WTC11 (cell line): ENCODE measurements at regions of chr10 and their contacts with region 1.

Region 1: DNA sequence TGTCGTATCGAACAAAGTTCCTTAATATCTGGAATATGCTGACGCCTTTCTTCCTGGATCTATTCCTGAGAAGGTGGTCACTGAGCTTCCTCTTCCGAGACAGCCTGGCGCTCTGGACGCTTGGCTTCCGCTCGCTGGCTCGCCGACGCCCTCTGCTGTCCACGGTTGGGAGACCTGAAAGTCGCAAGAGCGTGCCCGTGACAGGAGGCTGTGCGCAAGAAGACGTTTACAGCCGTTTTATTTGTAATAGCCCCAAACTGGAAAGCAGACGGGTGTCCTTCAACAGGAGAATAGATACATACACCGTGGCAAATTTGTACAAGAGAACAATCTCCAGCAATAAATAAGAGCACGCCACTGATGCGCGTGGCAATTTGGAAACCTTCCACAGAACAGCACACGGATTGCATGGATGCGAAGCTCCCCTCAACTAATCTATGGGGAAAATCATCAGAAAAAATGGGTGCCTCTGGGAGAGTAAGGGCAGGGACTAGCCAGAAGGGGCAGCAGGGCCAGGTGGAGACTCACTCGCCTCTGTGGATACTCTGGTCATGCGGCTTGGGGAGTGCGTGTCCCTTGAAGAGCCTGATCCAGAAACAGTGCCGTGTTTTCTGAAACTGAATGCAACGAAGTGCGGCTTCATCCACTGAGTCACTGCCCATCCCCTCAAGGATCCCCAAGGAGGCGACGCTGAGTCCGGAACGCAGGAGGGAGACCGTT is 41.5 kb upstream of the BNIP3 start:
- DNase-seq: peak; percentile 88
- ATAC-seq: peak; percentile 93
- H3K4me3 Mint-ChIP-seq: 0 out of 2 replicates have a peak overlapping the region, but pooled peaks have one; percentile 0
- H3K27ac Mint-ChIP-seq: no peak overlapping the region
- H3K4me1 Mint-ChIP-seq: peaks cover 8% of the 10 kb centered on the region
- H3K27me3 Mint-ChIP-seq: peaks cover 22% of the 10 kb centered on the region
- CTCF ChIP-seq: peak; percentile 76

Region 2: DNA sequence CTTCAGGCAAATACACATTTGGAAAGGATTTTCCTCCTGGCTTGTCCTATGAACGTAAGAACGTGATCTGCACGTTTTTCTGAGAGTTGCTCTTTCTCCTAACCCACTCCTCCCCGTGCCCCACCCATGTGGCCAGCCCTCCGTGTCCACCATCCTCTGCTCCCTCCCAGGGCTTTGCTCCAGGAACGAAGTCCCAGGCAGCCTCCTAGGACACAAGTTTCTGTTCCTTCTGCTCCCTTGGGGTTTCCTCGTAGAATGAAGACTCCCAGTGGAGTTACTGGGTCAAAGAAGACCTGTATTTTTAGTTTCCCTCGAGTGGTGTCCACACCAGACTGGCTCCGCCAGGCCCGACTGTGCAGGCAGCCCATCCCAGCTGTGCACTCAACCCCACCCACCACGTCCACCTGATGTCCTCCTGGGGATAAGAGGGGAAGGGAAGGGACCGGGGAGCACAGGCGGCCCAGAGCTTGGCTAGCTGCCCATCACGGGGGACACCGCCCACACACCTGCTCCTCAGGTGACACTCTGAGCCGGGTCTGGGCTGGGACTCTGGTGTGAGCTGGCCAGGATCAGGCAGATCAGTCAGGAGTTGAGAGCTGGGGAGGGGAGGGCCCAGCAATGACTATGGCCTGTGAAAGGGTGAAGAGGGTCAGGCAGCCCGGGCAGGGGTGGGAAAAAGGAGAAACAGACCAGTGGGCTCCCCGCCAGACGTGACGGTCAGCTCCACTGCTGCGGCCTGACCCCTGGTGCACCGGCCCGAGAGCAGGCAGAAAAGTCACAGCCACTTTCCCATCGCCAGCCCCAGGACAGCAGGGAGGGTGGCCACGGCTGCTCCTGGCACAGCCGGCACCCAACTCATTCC is 176.8 kb before region 1 on chr10:
- CTCF ChIA-PET with region 1: no interaction called
- POLR2A ChIA-PET with region 1: no interaction called
- DNase-seq: no peak
- ATAC-seq: no peak
- H3K4me3 Mint-ChIP-seq: no peak overlapping the region
- H3K27ac Mint-ChIP-seq: no peak overlapping the region
- H3K4me1 Mint-ChIP-seq: no peaks in the 10 kb centered on the region
- H3K27me3 Mint-ChIP-seq: no peaks in the 10 kb centered on the region
- CTCF ChIP-seq: no peak

Region 3: DNA sequence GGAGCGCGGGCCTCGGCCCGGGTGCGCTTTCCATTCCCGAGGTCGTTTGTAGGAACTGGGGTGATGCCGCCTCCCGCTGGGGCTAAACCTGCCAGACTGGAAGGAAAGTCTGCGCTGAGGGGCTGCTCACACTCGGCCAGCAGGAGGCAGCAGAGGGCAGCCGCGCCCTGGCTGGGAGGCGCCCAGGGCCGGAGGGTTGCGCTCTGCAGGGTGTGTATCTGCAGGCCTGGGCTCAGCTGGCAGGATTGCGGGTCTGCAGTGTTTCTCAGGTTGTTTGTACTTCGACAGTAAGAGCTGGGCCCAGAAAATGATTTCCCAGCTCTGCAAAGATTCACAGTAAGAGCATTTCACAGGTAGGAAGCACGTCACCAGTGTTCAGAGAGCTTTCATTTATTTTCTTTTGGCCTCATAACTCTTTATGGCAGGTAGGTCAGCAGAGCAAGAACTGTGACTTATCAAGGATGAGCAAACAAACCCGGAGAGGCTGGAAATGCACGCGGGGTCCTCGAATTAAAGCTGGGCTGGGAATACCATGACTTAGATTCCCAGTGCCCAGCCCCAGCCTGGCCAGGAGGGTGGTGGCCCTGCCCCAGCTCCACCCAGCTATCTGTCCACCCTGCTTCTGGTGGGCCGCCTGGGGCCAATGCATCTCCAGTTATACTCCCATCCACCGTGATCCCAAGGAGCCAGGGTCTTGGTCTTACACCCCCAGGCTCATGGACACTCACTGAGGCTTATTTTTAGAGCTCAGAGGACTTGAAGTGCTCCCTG is 137.7 kb before region 1 on chr10:
- CTCF ChIA-PET with region 1: interaction called, 22 read pairs
- POLR2A ChIA-PET with region 1: no interaction called
- DNase-seq: peak; percentile 88
- ATAC-seq: peak; percentile 99
- H3K4me3 Mint-ChIP-seq: no peak overlapping the region
- H3K27ac Mint-ChIP-seq: no peak overlapping the region
- H3K4me1 Mint-ChIP-seq: peaks cover 7% of the 10 kb centered on the region
- H3K27me3 Mint-ChIP-seq: no peaks in the 10 kb centered on the region
- CTCF ChIP-seq: peak; percentile 78

Region 4: GRCh38 chr10:131943021-131943814 is 80.0 kb before region 1 on chr10:
- CTCF ChIA-PET with region 1: interaction called, 23 read pairs
- POLR2A ChIA-PET with region 1: no interaction called
- DNase-seq: peak; percentile 72
- ATAC-seq: peak; percentile 96
- H3K4me3 Mint-ChIP-seq: no peak overlapping the region
- H3K27ac Mint-ChIP-seq: 0 out of 2 replicates have a peak overlapping the region, but pooled peaks have one; percentile 29
- H3K4me1 Mint-ChIP-seq: no peaks in the 10 kb centered on the region
- H3K27me3 Mint-ChIP-seq: no peaks in the 10 kb centered on the region
- CTCF ChIP-seq: no peak; the same call in 1 of the 2 replicates

Region 5: GRCh38 chr10:131972474-131973071 is 50.7 kb before region 1 on chr10:
- CTCF ChIA-PET with region 1: interaction called, 21 read pairs
- POLR2A ChIA-PET with region 1: interaction called, 4 read pairs
- DNase-seq: no peak
- ATAC-seq: peak; percentile 49; the same call in 1 of the 2 replicates
- H3K4me3 Mint-ChIP-seq: no peak overlapping the region
- H3K27ac Mint-ChIP-seq: peak overlapping the region; percentile 83; the same call in 1 of the 2 replicates
- H3K4me1 Mint-ChIP-seq: peaks cover 36% of the 10 kb centered on the region
- H3K27me3 Mint-ChIP-seq: no peaks in the 10 kb centered on the region
- CTCF ChIP-seq: no peak

Region 6: DNA sequence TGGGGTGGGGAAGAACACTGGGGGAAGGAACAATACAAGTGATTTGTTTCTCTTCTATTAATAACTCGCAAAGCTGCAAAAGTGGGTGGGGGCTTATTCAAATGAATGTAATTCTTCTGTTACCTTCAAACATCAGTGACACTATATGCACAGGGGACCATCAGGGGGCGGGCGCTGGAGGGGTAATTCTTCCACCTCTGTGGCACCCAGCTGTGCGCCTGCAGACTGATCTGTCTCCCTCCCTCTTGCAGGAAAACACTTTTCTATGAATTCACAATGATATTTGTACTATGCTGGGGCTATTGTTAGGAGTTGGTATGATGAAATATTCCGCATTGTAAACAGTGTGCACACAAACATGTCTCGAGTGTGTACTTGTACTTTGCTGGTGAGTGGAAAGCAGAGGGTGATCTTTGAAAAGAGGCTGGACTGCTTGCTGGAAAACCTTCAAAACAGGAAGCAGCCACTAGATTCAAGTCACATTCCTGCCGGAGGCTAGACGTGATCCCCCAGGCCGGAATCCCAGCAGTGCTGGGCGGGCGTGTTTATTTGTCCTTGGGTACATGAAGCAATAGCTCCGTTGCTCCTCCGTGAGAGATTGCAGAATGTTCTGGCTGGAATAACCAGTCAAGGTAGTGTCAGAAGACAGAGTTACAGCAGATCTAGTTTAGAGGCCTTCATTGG is 25.7 kb before region 1 on chr10:
- CTCF ChIA-PET with region 1: interaction called, 112 read pairs
- POLR2A ChIA-PET with region 1: no interaction called
- DNase-seq: peak; percentile 57
- ATAC-seq: peak; percentile 46
- H3K4me3 Mint-ChIP-seq: no peak overlapping the region
- H3K27ac Mint-ChIP-seq: peak overlapping the region; percentile 95
- H3K4me1 Mint-ChIP-seq: peaks cover 60% of the 10 kb centered on the region
- H3K27me3 Mint-ChIP-seq: no peaks in the 10 kb centered on the region
- CTCF ChIP-seq: no peak

Region 7: GRCh38 chr10:132036153-132036886 is 13.1 kb after region 1 on chr10:
- CTCF ChIA-PET with region 1: interaction called, 17 read pairs
- POLR2A ChIA-PET with region 1: no interaction called
- DNase-seq: peak; percentile 58
- ATAC-seq: peak; percentile 26
- H3K4me3 Mint-ChIP-seq: peak overlapping the region; percentile 68
- H3K27ac Mint-ChIP-seq: no peak overlapping the region
- H3K4me1 Mint-ChIP-seq: peaks cover 26% of the 10 kb centered on the region
- H3K27me3 Mint-ChIP-seq: peaks cover 55% of the 10 kb centered on the region
- CTCF ChIP-seq: no peak

Region 8: GRCh38 chr10:132078746-132079345 is 55.6 kb after region 1 on chr10:
- CTCF ChIA-PET with region 1: no interaction called
- POLR2A ChIA-PET with region 1: no interaction called
- DNase-seq: peak; percentile 33
- ATAC-seq: peak; percentile 76
- H3K4me3 Mint-ChIP-seq: no peak overlapping the region
- H3K27ac Mint-ChIP-seq: peak overlapping the region; percentile 71; the same call in 1 of the 2 replicates
- H3K4me1 Mint-ChIP-seq: peaks cover 20% of the 10 kb centered on the region
- H3K27me3 Mint-ChIP-seq: no peaks in the 10 kb centered on the region
- CTCF ChIP-seq: no peak

Region 9: DNA sequence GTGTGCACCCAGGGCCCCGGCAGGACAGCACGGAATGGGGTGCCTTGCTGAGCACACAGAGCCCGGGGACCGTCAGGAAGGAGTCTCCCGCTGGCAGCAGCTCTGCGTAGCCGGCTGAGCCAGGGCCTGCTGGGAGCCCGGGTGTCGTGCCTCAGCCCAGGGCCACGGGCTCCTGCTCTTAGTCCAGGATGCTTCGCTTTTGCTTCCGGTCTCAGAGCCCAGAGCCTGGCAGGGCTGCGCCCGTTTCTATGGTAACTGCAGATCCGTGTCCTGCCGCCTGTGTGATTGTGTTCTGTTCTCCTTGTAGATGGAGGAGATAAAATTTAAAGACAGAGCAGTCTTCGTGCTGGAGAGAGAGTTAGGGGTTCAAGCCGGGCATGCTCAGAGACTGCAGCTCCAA is 109.8 kb after region 1 on chr10:
- CTCF ChIA-PET with region 1: interaction called, 12 read pairs
- POLR2A ChIA-PET with region 1: no interaction called
- DNase-seq: no peak
- ATAC-seq: no peak
- H3K4me3 Mint-ChIP-seq: no peak overlapping the region
- H3K27ac Mint-ChIP-seq: no peak overlapping the region
- H3K4me1 Mint-ChIP-seq: peaks cover 5% of the 10 kb centered on the region; the same call in 1 of the 2 replicates
- H3K27me3 Mint-ChIP-seq: no peaks in the 10 kb centered on the region
- CTCF ChIP-seq: no peak